Activated CD4-positive, alpha-beta memory T cell treated with anti-CD3 and anti-CD28 coated beads, Interleukin-2, amount 10 ng/mL, durations not matched to agents 7 days and 5 days (primary cell): ENCODE measurements at regions of chr6 and their contacts with region 1.

Region 1: DNA sequence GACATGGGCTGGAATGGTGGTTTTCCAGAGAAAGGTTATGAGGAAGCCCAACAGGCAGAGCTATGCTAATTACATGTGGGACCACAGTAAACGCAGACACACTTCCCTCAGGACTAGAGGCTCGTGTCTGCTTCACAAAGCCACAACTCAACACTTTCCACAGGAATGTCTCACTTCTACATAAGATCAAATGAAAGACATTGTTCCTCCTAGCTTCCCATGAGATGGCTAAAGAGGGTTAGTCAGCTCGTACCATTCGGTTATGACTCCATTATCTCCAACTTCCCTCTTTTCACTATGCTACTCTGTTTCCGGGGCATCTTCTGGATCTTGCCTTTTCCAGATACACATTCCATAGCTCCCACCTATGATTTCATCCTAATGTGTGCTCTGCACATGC is 29.1 kb upstream of the ZC3H12D start:
- DNase-seq: no peak
- H3K4me3 Mint-ChIP-seq: no peak overlapping the region
- H3K27ac Mint-ChIP-seq: no peak overlapping the region
- H3K4me1 Mint-ChIP-seq: peaks cover 41% of the 10 kb centered on the region
- H3K27me3 Mint-ChIP-seq: no peaks in the 10 kb centered on the region

Region 2: DNA sequence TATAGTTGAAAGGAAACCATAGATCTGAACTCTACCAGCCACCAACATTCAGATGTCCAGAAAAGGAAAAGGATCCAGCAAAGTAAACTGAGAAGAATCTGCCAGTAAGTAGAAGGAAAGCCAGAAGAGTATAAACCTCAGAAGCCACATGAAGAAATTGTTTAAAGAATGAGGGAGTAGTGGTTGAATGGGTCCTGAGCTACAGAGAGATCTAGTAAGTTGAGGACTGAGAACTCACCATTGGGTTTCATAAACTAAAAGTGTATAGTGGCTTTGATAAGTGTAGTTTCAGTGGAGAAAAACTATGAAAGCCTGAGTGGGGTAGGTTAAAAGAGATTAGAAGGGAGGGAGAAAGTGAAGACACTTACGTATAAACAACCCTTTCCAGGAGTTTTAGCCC is 145.8 kb before region 1 on chr6:
- CTCF ChIA-PET with region 1: no interaction called
- POLR2A ChIA-PET with region 1: no interaction called
- DNase-seq: no peak
- H3K4me3 Mint-ChIP-seq: no peak overlapping the region
- H3K27ac Mint-ChIP-seq: no peak overlapping the region
- H3K4me1 Mint-ChIP-seq: peaks cover 39% of the 10 kb centered on the region
- H3K27me3 Mint-ChIP-seq: no peaks in the 10 kb centered on the region

Region 3: DNA sequence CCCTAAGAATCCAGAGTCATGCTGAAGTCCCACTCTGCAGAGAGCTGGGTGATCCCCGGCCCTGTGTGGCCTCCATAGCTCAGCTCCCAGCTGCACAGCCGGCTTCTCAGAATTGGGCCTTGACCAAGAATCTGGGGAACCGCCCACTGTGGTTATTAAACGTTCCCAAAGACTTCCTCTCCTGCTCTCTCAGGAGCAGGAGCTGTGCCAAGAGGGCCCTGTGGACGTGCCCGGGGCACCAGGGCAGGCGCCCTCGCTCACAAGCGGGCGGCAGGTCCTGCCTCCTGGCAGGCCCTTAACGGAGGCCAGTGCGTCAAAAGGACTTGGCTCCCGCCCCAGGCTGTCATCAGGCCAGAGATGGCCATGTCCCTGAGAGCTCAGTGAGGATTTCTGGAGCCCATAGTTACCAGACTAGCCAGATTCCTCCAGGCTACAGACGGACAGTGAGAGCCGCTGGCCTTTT is 59.5 kb before region 1 on chr6:
- CTCF ChIA-PET with region 1: interaction called, 13 read pairs
- POLR2A ChIA-PET with region 1: no interaction called
- DNase-seq: no peak
- H3K4me3 Mint-ChIP-seq: no peak overlapping the region
- H3K27ac Mint-ChIP-seq: no peak overlapping the region
- H3K4me1 Mint-ChIP-seq: peaks cover 7% of the 10 kb centered on the region
- H3K27me3 Mint-ChIP-seq: no peaks in the 10 kb centered on the region

Region 4: GRCh38 chr6:149484733-149485700 is 28.9 kb before region 1 on chr6 and contains the start of gene ZC3H12D:
- CTCF ChIA-PET with region 1: interaction called, 10 read pairs
- POLR2A ChIA-PET with region 1: interaction called, 13 read pairs
- DNase-seq: peak; percentile 86
- H3K4me3 Mint-ChIP-seq: peak within 1 kb of the TSS; percentile 98
- H3K27ac Mint-ChIP-seq: peak within 1 kb of the TSS; percentile 96
- H3K4me1 Mint-ChIP-seq: peaks cover 41% of the 10 kb centered on the region
- H3K27me3 Mint-ChIP-seq: no peaks in the 10 kb centered on the region
- total RNA-seq, gene ZC3H12D: 37.4 to 37.6 TPM

Region 5: DNA sequence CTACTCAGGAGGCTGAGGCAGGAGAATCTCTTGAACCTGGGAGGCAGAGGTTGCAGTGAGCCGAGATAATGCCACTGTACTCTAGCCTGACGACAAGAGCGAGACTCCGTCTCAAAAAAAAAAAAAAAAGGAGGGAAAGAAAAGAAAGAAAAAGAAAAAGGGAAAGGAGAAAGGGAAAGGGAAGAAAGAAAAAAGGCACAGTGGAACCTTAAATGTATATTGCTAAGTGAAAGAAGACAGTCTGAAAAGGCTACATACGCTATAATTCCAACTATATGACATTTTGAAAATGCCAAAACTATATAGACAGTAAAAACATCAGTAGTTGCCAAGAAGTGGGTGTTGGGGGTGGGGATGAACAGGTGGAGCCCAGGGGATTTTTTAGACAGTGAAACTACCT is 15.7 kb after region 1 on chr6:
- CTCF ChIA-PET with region 1: interaction called, 14 read pairs
- POLR2A ChIA-PET with region 1: interaction called, 3 read pairs
- DNase-seq: no peak
- H3K4me3 Mint-ChIP-seq: no peak overlapping the region
- H3K27ac Mint-ChIP-seq: no peak overlapping the region
- H3K4me1 Mint-ChIP-seq: peaks cover 4% of the 10 kb centered on the region
- H3K27me3 Mint-ChIP-seq: no peaks in the 10 kb centered on the region